PC-3 (cell line): ENCODE measurements at regions of chr13 and their contacts with region 1.

Region 1: GRCh38 chr13:44435142-44435982 is 61.7 kb downstream of the SERP2 start:
- DNase-seq: peak; percentile 93
- ATAC-seq: peak; percentile 41
- H3K4me3 ChIP-seq: peak overlapping the region; percentile 100
- H3K27ac ChIP-seq: peak overlapping the region; percentile 90
- H3K4me1 ChIP-seq: peaks cover 22% of the 10 kb centered on the region
- H3K27me3 ChIP-seq: no peaks in the 10 kb centered on the region
- CTCF ChIP-seq: no peak

Region 2: DNA sequence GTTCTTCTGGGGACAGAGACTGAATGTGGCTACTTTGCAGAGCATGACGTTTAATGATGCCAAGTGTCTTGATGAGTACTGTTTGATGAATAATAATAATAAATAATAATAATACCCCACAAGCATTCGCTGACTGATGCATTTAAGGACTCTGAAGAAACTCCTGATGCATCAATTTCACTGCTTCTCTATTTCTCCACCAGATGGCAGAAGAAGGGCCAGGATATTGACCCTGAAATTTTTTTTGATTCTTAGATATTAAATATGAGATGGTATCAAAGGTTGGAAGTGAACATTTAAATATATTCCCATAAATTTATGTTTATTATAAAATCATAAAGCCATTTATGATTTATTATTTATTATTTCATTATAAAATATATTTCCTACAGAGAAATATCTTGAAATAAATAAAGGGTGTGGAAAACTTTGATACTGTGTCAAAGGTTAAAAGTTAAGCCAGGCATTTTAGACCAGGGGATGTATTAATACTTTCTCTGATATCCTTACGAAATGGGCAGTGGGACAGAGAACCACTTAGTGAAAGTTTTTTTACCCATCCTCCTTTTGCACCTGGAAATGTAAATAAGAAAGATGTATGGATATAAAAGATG is 384.8 kb before region 1 on chr13:
- CTCF ChIA-PET with region 1: interaction called, 6 read pairs
- POLR2A ChIA-PET with region 1: interaction called, 5 read pairs
- intact Hi-C with region 1: loop called (anchors 1 kb)
- DNase-seq: peak; percentile 62
- ATAC-seq: no peak
- H3K4me3 ChIP-seq: no peak overlapping the region
- H3K27ac ChIP-seq: peak overlapping the region; percentile 67
- H3K4me1 ChIP-seq: peaks cover 26% of the 10 kb centered on the region
- H3K27me3 ChIP-seq: no peaks in the 10 kb centered on the region
- CTCF ChIP-seq: peak; percentile 61

Region 3: GRCh38 chr13:44218501-44219240 is 216.7 kb before region 1 on chr13:
- CTCF ChIA-PET with region 1: no interaction called
- POLR2A ChIA-PET with region 1: interaction called, 10 read pairs
- intact Hi-C with region 1: no loop called
- DNase-seq: peak; percentile 67
- ATAC-seq: peak; percentile 70
- H3K4me3 ChIP-seq: no peak overlapping the region
- H3K27ac ChIP-seq: peak overlapping the region; percentile 93
- H3K4me1 ChIP-seq: peaks cover 42% of the 10 kb centered on the region
- H3K27me3 ChIP-seq: no peaks in the 10 kb centered on the region
- CTCF ChIP-seq: no peak

Region 4: GRCh38 chr13:44243198-44243857 is 192.0 kb before region 1 on chr13:
- CTCF ChIA-PET with region 1: no interaction called
- POLR2A ChIA-PET with region 1: no interaction called
- intact Hi-C with region 1: loop called (anchors 1 kb)
- DNase-seq: peak; percentile 59
- ATAC-seq: peak; percentile 81
- H3K4me3 ChIP-seq: no peak overlapping the region
- H3K27ac ChIP-seq: peak overlapping the region; percentile 92
- H3K4me1 ChIP-seq: peaks cover 20% of the 10 kb centered on the region
- H3K27me3 ChIP-seq: no peaks in the 10 kb centered on the region
- CTCF ChIP-seq: peak; percentile 64

Region 5: DNA sequence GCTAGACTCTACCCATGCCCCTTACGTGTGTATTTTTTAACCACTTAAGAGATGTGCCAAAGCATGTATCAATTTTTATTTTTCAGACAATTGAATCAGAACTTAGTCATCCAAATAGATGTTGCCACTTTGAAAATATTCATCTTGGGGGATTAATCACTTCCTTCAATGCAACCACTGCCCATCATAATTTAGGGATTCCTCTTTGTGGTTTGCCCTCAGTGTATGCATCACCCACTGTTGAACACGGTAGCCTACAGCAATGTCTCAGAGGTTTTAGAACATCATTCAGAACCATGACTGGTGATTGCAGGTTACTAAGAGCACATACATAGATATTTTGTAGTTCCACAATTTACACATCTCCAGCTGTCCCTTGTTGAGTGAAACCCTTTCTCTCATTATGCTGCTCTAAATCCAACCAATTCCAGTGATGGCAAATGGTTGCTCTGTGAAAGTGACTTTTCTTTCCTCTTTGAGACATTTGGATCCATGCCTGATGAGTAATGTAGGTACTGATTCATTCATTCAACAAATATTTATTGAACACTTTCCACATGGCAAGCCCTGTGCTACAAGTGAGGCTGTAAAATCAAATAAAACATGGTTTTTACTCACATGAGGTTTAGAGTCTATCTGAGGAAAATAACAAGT is 122.3 kb before region 1 on chr13:
- CTCF ChIA-PET with region 1: no interaction called
- POLR2A ChIA-PET with region 1: interaction called, 16 read pairs
- intact Hi-C with region 1: loop called (anchors 1 kb)
- DNase-seq: peak; percentile 91
- ATAC-seq: peak; percentile 60
- H3K4me3 ChIP-seq: peak overlapping the region; percentile 43; the same call in 1 of the 2 replicates
- H3K27ac ChIP-seq: peak overlapping the region; percentile 100
- H3K4me1 ChIP-seq: peaks cover 72% of the 10 kb centered on the region
- H3K27me3 ChIP-seq: no peaks in the 10 kb centered on the region
- CTCF ChIP-seq: no peak

Region 6: GRCh38 chr13:44470638-44471562 is 35.5 kb after region 1 on chr13:
- CTCF ChIA-PET with region 1: no interaction called
- POLR2A ChIA-PET with region 1: interaction called, 6 read pairs
- intact Hi-C with region 1: loop called (anchors 1 kb)
- DNase-seq: peak; percentile 50
- ATAC-seq: no peak; the same call in 1 of the 2 replicates
- H3K4me3 ChIP-seq: peak overlapping the region; percentile 49; the same call in 1 of the 2 replicates
- H3K27ac ChIP-seq: peak overlapping the region; percentile 54
- H3K4me1 ChIP-seq: peaks cover 45% of the 10 kb centered on the region
- H3K27me3 ChIP-seq: no peaks in the 10 kb centered on the region
- CTCF ChIP-seq: peak; percentile 54